Endothelial cell of umbilical vein (primary cell): ENCODE measurements at regions of chr16 and their contacts with region 1.

Region 1: DNA sequence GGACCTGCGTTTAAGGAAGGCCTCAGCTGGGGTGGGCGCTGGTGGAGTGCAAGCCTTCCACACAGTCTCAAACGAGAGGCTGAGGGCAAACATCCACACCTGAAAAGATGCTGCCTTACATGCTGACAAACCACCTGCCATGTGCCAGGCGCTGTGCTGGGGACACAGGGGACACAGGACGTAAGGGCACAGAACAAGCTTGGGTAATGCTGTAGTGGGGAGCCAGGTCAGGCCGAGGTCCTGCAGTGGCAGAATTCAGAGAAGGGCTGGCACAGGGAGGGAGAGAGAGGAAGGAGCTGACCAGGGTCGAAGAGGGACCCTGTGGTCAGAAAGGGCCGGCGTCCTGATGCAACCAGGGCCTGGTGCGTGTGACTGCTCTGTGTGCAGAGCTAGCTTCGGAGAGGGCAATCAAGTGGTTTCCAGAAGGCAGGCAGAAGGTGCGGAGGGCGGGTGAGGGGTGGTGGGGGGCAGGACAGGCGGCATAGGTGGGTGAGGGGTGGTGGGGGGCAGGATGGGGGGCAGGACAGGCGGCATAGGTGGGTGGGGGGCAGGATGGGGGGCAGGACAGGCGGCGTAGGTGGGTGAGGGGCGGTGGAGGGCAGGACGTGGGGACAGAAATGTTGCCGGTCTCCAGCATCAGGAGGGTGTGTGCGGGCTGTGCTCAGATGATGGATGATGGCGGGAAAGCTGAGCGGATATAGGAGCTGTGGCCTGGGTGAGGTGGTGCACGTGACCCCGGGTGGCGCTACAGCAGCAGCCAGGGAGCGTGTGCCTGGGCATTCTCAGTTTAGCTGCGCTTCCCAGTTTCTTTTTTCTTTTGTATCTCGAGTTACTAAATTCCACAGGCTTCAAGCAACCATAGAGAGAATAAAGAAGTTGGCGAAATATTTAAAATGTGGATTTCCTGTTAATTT is 18.8 kb downstream of the TELO2 start:
- DNase-seq: no peak
- H3K4me3 ChIP-seq: peak overlapping the region in 1 of 3 experiments; percentile 9
- H3K27ac ChIP-seq: peak overlapping the region; percentile 21
- H3K4me1 ChIP-seq: peaks cover 12% of the 10 kb centered on the region
- H3K27me3 ChIP-seq: no peaks in the 10 kb centered on the region
- CTCF ChIP-seq: no peak
- POLR2A ChIP-seq: no peak

Region 2: GRCh38 chr16:1523581-1524205 is 11.8 kb after region 1 on chr16:
- CTCF ChIA-PET with region 1: interaction called, 12 read pairs
- POLR2A ChIA-PET with region 1: no interaction called
- dilution Hi-C with region 1: no loop called
- intact Hi-C with region 1: no loop called
- DNase-seq: no peak
- H3K4me3 ChIP-seq: no peak overlapping the region
- H3K27ac ChIP-seq: no peak overlapping the region
- H3K4me1 ChIP-seq: peaks cover 14% of the 10 kb centered on the region
- H3K27me3 ChIP-seq: no peaks in the 10 kb centered on the region
- CTCF ChIP-seq: no peak
- POLR2A ChIP-seq: no peak

Region 3: GRCh38 chr16:1533443-1533951 is 21.6 kb after region 1 on chr16 and contains the start of gene TMEM204:
- CTCF ChIA-PET with region 1: interaction called, 6 read pairs
- POLR2A ChIA-PET with region 1: no interaction called
- dilution Hi-C with region 1: no loop called
- intact Hi-C with region 1: loop called (anchors 1 kb)
- DNase-seq: peak; percentile 83
- H3K4me3 ChIP-seq: peak within 1 kb of the TSS; percentile 39 to 72 (median 56)
- H3K27ac ChIP-seq: peak within 1 kb of the TSS; percentile 67
- H3K4me1 ChIP-seq: peaks cover 37% of the 10 kb centered on the region
- H3K27me3 ChIP-seq: no peaks in the 10 kb centered on the region
- CTCF ChIP-seq: no peak
- POLR2A ChIP-seq: peak; percentile 77
- total RNA-seq, gene TMEM204: 32.5 and 37.5 TPM in 2 replicates

Region 4: GRCh38 chr16:1543085-1543896 is 31.4 kb after region 1 on chr16:
- CTCF ChIA-PET with region 1: interaction called, 8 read pairs
- POLR2A ChIA-PET with region 1: interaction called, 4 read pairs
- dilution Hi-C with region 1: no loop called
- intact Hi-C with region 1: loop called (anchors 1 kb)
- DNase-seq: peak; percentile 92
- H3K4me3 ChIP-seq: no peak overlapping the region
- H3K27ac ChIP-seq: peak overlapping the region; percentile 98
- H3K4me1 ChIP-seq: peaks cover 51% of the 10 kb centered on the region
- H3K27me3 ChIP-seq: no peaks in the 10 kb centered on the region
- CTCF ChIP-seq: peak; percentile 23 to 26
- POLR2A ChIP-seq: no peak